ENCODE measurements at regions of chrX and their contacts with region 1.

Region 1: GRCh38 chrX:110853610-110854009 is 58.0 kb upstream of the CHRDL1 start:
- DNase-seq: no peak
- H3K4me3 ChIP-seq: no peak overlapping the region
- H3K27ac ChIP-seq: no peak overlapping the region
- H3K27me3 ChIP-seq: no peaks in the 10 kb centered on the region
- CTCF ChIP-seq: peak; percentile 19; the same call in 1 of the 2 replicates

Region 2: GRCh38 chrX:111244235-111244750 is 390.7 kb after region 1 on chrX:
- CTCF ChIA-PET with region 1: interaction called, 10 read pairs
- POLR2A ChIA-PET with region 1: no interaction called
- DNase-seq: no peak
- H3K4me3 ChIP-seq: no peak overlapping the region
- H3K27ac ChIP-seq: no peak overlapping the region
- H3K27me3 ChIP-seq: no peaks in the 10 kb centered on the region
- CTCF ChIP-seq: peak; percentile 35